MCF 10A (cell line): ENCODE measurements at regions of chr3 and their contacts with region 1.

Region 1: DNA sequence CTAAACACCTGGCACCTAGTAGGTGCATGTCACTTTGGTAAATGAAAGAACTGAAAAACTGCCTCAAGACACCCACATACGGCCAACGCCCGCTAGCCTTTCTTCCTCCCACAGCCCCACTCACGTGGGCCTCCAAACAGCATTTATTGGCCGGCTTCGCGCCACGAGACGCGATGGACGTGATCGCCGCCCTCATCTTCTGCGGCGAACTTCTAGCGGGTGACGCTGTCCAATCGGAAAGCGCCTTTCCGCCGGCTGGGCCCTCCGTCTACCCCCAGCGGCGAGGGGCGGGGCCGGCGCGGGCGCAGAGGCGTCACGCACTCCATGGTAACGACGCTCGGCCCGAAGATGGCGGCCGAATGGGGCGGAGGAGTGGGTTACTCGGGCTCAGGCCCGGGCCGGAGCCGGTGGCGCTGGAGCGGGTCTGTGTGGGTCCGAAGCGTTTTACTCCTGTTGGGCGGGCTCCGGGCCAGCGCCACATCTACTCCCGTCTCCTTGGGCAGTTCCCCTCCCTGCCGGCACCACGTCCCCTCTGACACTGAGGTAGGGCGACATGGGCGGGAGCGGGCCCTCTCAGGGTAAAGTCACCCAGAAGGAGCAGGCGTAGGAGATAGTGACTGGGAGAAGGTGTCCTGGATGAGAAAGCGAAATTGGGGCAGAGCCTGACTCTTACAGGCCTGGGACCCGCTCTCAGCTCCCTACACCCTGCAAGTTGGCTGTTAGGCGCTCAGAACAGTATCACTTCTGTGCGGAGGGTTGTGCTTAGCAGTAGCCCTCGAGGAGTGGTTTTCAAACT is at the start of gene LMLN:
- DNase-seq: peak; percentile 96
- H3K4me3 Mint-ChIP-seq: peak within 1 kb of the TSS; percentile 94
- H3K27ac Mint-ChIP-seq: peak within 1 kb of the TSS; percentile 95
- H3K4me1 Mint-ChIP-seq: peaks cover 45% of the 10 kb centered on the region
- H3K27me3 Mint-ChIP-seq: no peaks in the 10 kb centered on the region
- CTCF ChIP-seq: no peak
- total RNA-seq, gene LMLN: 8.0 and 11.2 TPM in 2 replicates

Region 2: DNA sequence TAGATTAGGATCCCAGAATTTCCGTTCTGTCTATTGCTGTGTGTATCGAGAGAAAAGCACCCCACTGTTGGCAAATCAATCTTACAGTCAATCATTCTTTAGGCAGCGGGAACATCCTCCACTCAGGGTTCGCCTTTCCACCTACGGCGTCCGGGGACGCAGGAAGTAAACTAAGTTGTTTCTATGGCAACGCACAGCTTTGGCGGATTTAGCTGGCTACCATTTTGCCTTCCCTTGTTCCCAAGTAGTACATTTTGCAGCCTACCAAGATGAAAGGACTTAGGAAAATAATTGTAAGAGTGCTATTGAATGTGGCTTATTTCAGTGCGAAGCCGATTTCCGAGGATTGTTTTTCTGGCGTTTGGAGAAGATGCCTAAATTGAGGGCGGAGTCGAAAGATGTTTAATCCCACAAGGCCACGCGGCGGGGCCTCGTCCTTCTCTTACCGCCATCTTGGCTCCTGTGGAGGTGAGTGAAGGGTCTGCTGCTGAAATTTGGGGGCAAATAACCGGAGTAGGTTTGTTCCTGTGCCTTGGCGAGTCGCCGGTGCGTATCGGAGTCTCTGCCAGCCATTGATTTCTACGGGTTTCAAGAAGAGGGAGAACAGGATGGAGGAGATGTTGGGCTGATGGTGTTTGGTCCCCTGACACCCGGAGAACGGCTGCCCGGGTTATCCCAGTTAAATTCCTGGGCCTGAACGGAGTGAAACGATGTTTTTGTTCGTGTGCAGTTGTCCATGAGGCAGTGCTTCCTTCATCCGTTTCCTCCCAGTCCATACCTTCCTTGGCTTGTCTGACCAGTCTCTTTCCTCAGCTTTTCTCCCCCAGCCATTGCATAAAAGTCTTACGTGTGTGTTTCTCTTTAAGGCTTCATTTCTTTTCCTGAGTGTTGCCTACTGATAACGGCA is 10.1 kb before region 1 on chr3 and contains the start of gene RPL35A:
- CTCF ChIA-PET with region 1: interaction called, 3 read pairs
- POLR2A ChIA-PET with region 1: interaction called, 45 read pairs
- intact Hi-C with region 1: no loop called
- DNase-seq: peak; percentile 94
- H3K4me3 Mint-ChIP-seq: peak within 1 kb of the TSS; percentile 96
- H3K27ac Mint-ChIP-seq: peak within 1 kb of the TSS; percentile 100
- H3K4me1 Mint-ChIP-seq: peaks cover 22% of the 10 kb centered on the region
- H3K27me3 Mint-ChIP-seq: no peaks in the 10 kb centered on the region
- CTCF ChIP-seq: no peak
- total RNA-seq, gene RPL35A: 1,642 and 1,967 TPM in 2 replicates

Region 3: DNA sequence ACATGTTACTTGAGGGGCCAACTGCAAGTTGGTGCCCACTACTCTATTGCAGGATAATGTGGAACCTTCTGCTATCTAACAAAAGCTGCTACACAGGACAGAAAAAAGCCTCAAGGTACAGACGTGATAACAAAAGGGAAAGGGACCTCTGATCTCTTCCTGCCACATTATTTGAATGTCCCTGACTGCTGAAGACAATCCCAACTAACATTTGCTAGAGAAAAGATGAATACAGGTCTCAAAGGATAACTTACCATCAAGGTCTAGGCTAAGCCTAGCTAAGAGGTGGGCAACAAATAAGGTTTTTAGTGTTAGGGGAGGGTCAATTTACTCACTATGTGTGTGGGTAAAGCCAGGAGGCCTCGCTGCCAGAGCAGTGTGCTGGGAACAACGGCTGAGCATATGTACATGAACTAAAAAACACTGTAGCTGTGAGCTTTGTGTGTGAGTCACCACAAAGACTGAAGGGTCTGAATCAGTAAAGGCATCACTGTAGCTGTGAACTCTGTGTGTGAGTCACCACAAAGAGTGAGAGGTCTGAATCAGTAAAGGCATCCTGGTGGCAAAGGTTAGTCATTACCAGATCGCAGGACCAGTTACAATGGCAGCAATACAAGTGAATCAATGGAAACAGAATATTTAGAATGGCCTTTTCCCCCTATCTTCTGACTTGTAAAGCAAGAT is 111.6 kb after region 1 on chr3:
- CTCF ChIA-PET with region 1: interaction called, 4 read pairs
- POLR2A ChIA-PET with region 1: interaction called, 4 read pairs
- intact Hi-C with region 1: loop called (anchors 1 kb)
- DNase-seq: peak; percentile 91
- H3K4me3 Mint-ChIP-seq: no peak overlapping the region
- H3K27ac Mint-ChIP-seq: no peak overlapping the region
- H3K4me1 Mint-ChIP-seq: peaks cover 6% of the 10 kb centered on the region
- H3K27me3 Mint-ChIP-seq: peaks cover 50% of the 10 kb centered on the region
- CTCF ChIP-seq: peak; percentile 33